ENCODE measurements at regions of chr18 and their contacts with region 1.

Region 1: GRCh38 chr18:63016270-63016669 is 300.9 kb downstream of the PHLPP1 start:
- H3K4me3 Mint-ChIP-seq: no peak overlapping the region
- H3K27ac Mint-ChIP-seq: no peak overlapping the region
- H3K4me1 Mint-ChIP-seq: no peaks in the 10 kb centered on the region
- H3K27me3 Mint-ChIP-seq: no peaks in the 10 kb centered on the region

Region 2: DNA sequence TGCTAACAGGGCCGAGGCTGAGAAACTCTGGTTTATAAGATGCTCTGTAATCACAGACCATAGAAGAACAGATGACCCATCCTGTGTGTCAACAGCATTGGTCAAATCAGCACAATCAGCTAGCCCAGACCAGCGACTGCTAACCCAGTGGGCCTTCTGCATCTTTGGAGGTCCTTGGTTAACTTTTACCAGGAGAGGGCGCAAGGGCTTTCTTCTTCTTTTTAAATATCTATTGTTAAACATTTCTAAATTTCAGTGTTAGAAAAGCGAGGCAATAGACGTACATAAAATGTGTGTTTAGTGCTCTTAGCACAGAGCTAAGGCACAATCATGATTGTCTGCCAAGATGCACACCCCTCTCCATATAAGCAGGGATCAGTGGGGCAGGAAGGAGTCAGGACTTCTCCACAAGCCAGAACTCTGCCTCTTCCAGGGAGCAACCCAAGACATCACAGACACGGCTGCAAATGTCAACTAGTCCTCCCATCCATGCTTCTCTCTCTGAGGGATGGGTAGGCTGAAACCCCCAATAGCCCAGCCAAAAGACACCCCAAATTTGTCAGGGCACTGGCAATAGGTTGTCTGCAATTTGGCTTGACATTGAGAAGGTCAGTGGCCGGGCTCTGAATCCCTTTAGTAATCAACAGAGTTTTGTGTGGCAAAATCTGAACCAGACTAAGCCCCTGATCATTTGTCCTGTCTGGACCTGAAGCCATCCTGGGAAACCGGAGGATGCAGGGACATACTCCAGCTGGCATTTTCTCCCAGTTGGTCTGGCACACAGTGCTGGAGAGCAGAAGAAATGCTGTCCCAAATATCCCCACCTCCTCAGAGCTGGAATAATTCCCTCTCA is 115.1 kb after region 1 on chr18:
- intact Hi-C with region 1: loop called (anchors 5 kb)
- H3K4me3 Mint-ChIP-seq: no peak overlapping the region
- H3K27ac Mint-ChIP-seq: no peak overlapping the region
- H3K4me1 Mint-ChIP-seq: peaks cover 13% of the 10 kb centered on the region
- H3K27me3 Mint-ChIP-seq: peaks cover 4% of the 10 kb centered on the region

Region 3: GRCh38 chr18:63155169-63155852 is 139.0 kb after region 1 on chr18:
- intact Hi-C with region 1: loop called (anchors 5 kb)
- H3K4me3 Mint-ChIP-seq: peak overlapping the region; percentile 65
- H3K27ac Mint-ChIP-seq: peak overlapping the region; percentile 64
- H3K4me1 Mint-ChIP-seq: peaks cover 26% of the 10 kb centered on the region
- H3K27me3 Mint-ChIP-seq: peaks cover 14% of the 10 kb centered on the region

Region 4: DNA sequence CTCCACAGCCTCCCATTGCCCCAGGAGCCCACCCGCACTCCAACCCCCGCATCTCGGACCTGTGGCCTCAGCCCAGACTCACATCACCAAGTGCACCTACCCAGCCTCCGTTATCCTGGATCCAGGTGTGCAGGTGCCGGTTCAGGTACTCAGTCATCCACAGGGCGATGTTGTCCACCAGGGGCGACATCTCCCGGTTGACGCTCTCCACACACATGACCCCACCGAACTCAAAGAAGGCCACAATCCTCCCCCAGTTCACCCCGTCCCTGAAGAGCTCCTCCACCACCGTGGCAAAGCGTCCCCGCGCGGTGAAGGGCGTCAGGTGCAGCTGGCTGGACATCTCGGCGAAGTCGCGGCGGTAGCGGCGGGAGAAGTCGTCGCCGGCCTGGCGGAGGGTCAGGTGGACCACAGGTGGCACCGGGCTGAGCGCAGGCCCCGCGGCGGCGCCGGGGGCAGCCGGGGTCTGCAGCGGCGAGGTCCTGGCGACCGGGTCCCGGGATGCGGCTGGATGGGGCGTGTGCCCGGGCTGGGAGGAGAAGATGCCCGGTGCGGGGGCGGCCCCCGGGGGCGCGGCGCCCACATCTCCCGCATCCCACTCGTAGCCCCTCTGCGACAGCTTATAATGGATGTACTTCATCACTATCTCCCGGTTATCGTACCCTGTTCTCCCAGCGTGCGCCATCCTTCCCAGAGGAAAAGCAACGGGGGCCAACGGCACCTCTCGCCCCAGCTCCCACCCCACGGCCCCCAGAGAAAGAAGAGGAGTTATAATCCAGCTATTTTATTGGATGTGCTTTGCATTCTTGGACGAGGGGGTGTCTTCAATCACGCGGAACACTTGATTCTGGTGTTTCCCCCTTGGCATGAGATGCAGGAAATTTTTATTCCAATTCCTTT is 302.0 kb after region 1 on chr18:
- intact Hi-C with region 1: loop called (anchors 1 kb)
- H3K4me3 Mint-ChIP-seq: peak overlapping the region; percentile 81
- H3K27ac Mint-ChIP-seq: peak overlapping the region; percentile 80
- H3K4me1 Mint-ChIP-seq: peaks cover 43% of the 10 kb centered on the region
- H3K27me3 Mint-ChIP-seq: peaks cover 22% of the 10 kb centered on the region

Region 5: DNA sequence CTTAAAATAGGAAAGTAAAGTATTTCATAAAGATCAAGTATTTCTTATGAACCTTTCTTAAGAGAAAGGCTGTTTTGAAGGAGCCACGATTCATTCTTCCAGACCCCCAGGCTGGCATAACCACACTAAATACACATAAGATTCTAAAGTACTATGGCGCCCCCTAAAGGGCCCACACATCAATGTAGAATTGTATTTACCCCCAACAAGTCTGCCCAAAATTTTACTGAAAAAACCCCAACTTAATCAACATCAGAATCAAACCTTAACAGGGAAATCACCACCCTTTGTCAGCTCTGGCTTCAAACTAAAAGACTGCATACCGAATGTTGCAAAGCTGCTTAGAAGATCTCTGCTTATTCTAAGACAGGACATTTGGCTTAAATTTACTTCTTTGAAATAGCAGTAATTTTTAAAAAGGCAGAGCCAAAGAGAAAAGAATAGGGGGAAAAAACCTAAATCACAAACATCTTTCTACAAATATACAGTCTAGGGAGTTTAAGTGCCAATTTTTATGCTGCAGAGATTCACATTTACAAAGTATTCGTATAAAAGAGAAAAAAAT is 323.7 kb after region 1 on chr18:
- intact Hi-C with region 1: loop called (anchors 5 kb)
- H3K4me3 Mint-ChIP-seq: no peak overlapping the region
- H3K27ac Mint-ChIP-seq: no peak overlapping the region
- H3K4me1 Mint-ChIP-seq: peaks cover 2% of the 10 kb centered on the region
- H3K27me3 Mint-ChIP-seq: no peaks in the 10 kb centered on the region

Region 6: GRCh38 chr18:63439334-63439733 is 423.1 kb after region 1 on chr18:
- intact Hi-C with region 1: loop called (anchors 5 kb)
- H3K4me3 Mint-ChIP-seq: no peak overlapping the region
- H3K27ac Mint-ChIP-seq: no peak overlapping the region
- H3K4me1 Mint-ChIP-seq: peaks cover 41% of the 10 kb centered on the region
- H3K27me3 Mint-ChIP-seq: no peaks in the 10 kb centered on the region